Activated CD4-positive, alpha-beta T cell treated with anti-CD3 and anti-CD28 coated beads for 36 hours (primary cell): ENCODE measurements at regions of chrX and their contacts with region 1.

Region 1: GRCh38 chrX:120452131-120452530 is 17.0 kb downstream of the LAMP2 start:
- DNase-seq: peak; percentile 8
- ATAC-seq: no peak
- H3K4me3 Mint-ChIP-seq: no peak overlapping the region
- H3K27ac Mint-ChIP-seq: peak overlapping the region; percentile 15
- H3K4me1 Mint-ChIP-seq: peaks cover 15% of the 10 kb centered on the region
- H3K27me3 Mint-ChIP-seq: no peaks in the 10 kb centered on the region

Region 2: GRCh38 chrX:120380699-120381098 is 71.4 kb before region 1 on chrX:
- CTCF ChIA-PET with region 1: interaction called, 8 read pairs
- POLR2A ChIA-PET with region 1: no interaction called
- intact Hi-C with region 1: loop called in 1 of 2 experiments (anchors 5 kb)
- DNase-seq: peak; percentile 33
- ATAC-seq: peak; percentile 73
- H3K4me3 Mint-ChIP-seq: no peak overlapping the region
- H3K27ac Mint-ChIP-seq: no peak overlapping the region
- H3K4me1 Mint-ChIP-seq: peaks cover 4% of the 10 kb centered on the region
- H3K27me3 Mint-ChIP-seq: no peaks in the 10 kb centered on the region

Region 3: GRCh38 chrX:121260596-121261240 is 808.6 kb after region 1 on chrX:
- CTCF ChIA-PET with region 1: no interaction called
- POLR2A ChIA-PET with region 1: no interaction called
- intact Hi-C with region 1: no loop called
- DNase-seq: no peak
- ATAC-seq: no peak
- H3K4me3 Mint-ChIP-seq: no peak overlapping the region
- H3K27ac Mint-ChIP-seq: no peak overlapping the region
- H3K4me1 Mint-ChIP-seq: peaks cover 16% of the 10 kb centered on the region
- H3K27me3 Mint-ChIP-seq: no peaks in the 10 kb centered on the region